Naive thymus-derived CD4-positive, alpha-beta T cell (primary cell): ENCODE measurements at regions of chr9 and their contacts with region 1.

Region 1: GRCh38 chr9:32550562-32551433 is 1.3 kb upstream of the SMIM27 start:
- DNase-seq: peak; percentile 89 to 99 (median 96)
- ATAC-seq: peak; percentile 90
- H3K4me3 ChIP-seq: peak overlapping the region; percentile 93
- H3K4me3 Mint-ChIP-seq: peak overlapping the region; percentile 92 to 100 (median 99)
- H3K27ac ChIP-seq: peak overlapping the region; percentile 97
- H3K27ac Mint-ChIP-seq: peak overlapping the region; percentile 96 to 100 (median 98)
- H3K4me1 ChIP-seq: peaks cover 13 to 20% of the 10 kb centered on the region in 2 donors
- H3K4me1 Mint-ChIP-seq: peaks cover 31 to 70% (median 56%) of the 10 kb centered on the region in 7 donors
- H3K27me3 ChIP-seq: no peaks in the 10 kb centered on the region
- H3K27me3 Mint-ChIP-seq: no peaks in the 10 kb centered on the region

Region 2: GRCh38 chr9:32334100-32334499 is 216.7 kb before region 1 on chr9:
- CTCF ChIA-PET with region 1: no interaction called
- POLR2A ChIA-PET with region 1: no interaction called
- intact Hi-C with region 1: no loop called
- DNase-seq: no peak
- ATAC-seq: no peak
- H3K4me3 ChIP-seq: no peak overlapping the region
- H3K4me3 Mint-ChIP-seq: no peak overlapping the region
- H3K27ac ChIP-seq: no peak overlapping the region
- H3K27ac Mint-ChIP-seq: no peak overlapping the region
- H3K4me1 ChIP-seq: no peaks in the 10 kb centered on the region
- H3K4me1 Mint-ChIP-seq: peaks cover 0 to 2% (median 0%) of the 10 kb centered on the region in 7 donors
- H3K27me3 ChIP-seq: no peaks in the 10 kb centered on the region
- H3K27me3 Mint-ChIP-seq: peaks cover 2 to 16% (median 5%) of the 10 kb centered on the region in 5 donors

Region 3: DNA sequence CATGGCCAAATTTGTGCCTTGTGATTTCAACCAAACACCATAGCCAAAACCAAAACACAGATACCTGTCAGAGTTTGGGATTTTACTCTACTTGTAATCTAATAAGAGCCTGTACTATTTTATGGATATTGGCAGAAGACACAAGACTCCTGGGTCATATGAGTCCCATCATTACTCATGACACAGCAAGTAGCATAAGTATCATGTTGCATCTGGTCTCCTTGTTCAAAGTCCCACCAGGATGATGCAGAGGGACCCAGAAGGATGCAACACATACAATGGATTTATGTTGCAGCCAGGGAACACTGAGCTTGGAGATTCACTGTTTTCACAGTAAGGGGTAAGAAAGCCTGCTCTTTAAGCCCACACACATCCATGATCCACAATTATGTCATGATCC is 179.5 kb before region 1 on chr9:
- CTCF ChIA-PET with region 1: no interaction called
- POLR2A ChIA-PET with region 1: no interaction called
- intact Hi-C with region 1: no loop called
- DNase-seq: no peak
- ATAC-seq: no peak
- H3K4me3 ChIP-seq: no peak overlapping the region
- H3K4me3 Mint-ChIP-seq: no peak overlapping the region
- H3K27ac ChIP-seq: no peak overlapping the region
- H3K27ac Mint-ChIP-seq: no peak overlapping the region
- H3K4me1 ChIP-seq: no peaks in the 10 kb centered on the region
- H3K4me1 Mint-ChIP-seq: no peaks in the 10 kb centered on the region
- H3K27me3 ChIP-seq: no peaks in the 10 kb centered on the region
- H3K27me3 Mint-ChIP-seq: peaks cover 0 to 12% (median 0%) of the 10 kb centered on the region in 5 donors

Region 4: GRCh38 chr9:32384364-32385151 is 166.2 kb before region 1 on chr9 and contains the start of gene ACO1:
- CTCF ChIA-PET with region 1: interaction called, 10 read pairs
- POLR2A ChIA-PET with region 1: interaction called, 16 read pairs
- intact Hi-C with region 1: loop called (anchors 1 kb)
- DNase-seq: peak; percentile 74 to 91 (median 83)
- ATAC-seq: peak; percentile 99
- H3K4me3 ChIP-seq: peak within 1 kb of the TSS; percentile 58
- H3K4me3 Mint-ChIP-seq: peak within 1 kb of the TSS; percentile 84 to 92 (median 88)
- H3K27ac ChIP-seq: peak within 1 kb of the TSS; percentile 70
- H3K27ac Mint-ChIP-seq: peak within 1 kb of the TSS in 8 of 9 donors; percentile 10 to 82 (median 58)
- H3K4me1 ChIP-seq: peaks cover 5 to 12% of the 10 kb centered on the region in 2 donors
- H3K4me1 Mint-ChIP-seq: peaks cover 13 to 29% (median 22%) of the 10 kb centered on the region in 7 donors
- H3K27me3 ChIP-seq: no peaks in the 10 kb centered on the region
- H3K27me3 Mint-ChIP-seq: peaks cover 0 to 31% (median 8%) of the 10 kb centered on the region in 5 donors
- total RNA-seq, gene ACO1: 4.7 to 10.5 (median 7.4) TPM

Region 5: GRCh38 chr9:32571969-32572899 is 21.4 kb after region 1 on chr9:
- CTCF ChIA-PET with region 1: interaction called, 48 read pairs
- POLR2A ChIA-PET with region 1: interaction called, 13 read pairs
- intact Hi-C with region 1: loop called (anchors 1 kb)
- DNase-seq: peak; percentile 33 to 85 (median 77)
- ATAC-seq: peak; percentile 92
- H3K4me3 ChIP-seq: peak overlapping the region; percentile 92
- H3K4me3 Mint-ChIP-seq: peak overlapping the region; percentile 98 to 100 (median 99)
- H3K27ac ChIP-seq: peak overlapping the region; percentile 86
- H3K27ac Mint-ChIP-seq: peak overlapping the region; percentile 93 to 99 (median 99)
- H3K4me1 ChIP-seq: peaks cover 14 to 22% of the 10 kb centered on the region in 2 donors
- H3K4me1 Mint-ChIP-seq: peaks cover 18 to 43% (median 30%) of the 10 kb centered on the region in 7 donors
- H3K27me3 ChIP-seq: no peaks in the 10 kb centered on the region
- H3K27me3 Mint-ChIP-seq: peaks cover 0 to 10% (median 0%) of the 10 kb centered on the region in 5 donors

Region 6: DNA sequence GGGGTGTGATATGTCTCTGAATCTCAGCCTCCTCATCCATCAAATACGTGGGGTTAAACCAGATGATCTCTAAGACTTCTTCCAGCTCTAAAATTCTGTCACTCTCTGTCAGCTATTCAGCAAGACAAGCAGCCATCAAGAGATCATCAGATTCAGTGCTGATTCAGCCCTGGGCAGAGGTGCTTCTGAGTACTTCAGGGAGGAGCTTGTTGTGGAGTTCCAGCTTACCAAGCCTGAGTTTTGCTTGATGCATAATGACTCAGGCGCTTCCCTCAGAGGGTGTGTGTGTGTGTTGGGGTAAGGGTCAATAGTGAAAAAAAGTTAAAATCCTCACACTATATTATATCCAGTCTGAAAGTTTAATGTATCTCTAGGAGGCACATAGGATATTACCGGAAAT is 114.3 kb after region 1 on chr9:
- CTCF ChIA-PET with region 1: no interaction called
- POLR2A ChIA-PET with region 1: no interaction called
- intact Hi-C with region 1: no loop called
- DNase-seq: no peak
- ATAC-seq: no peak
- H3K4me3 ChIP-seq: no peak overlapping the region
- H3K4me3 Mint-ChIP-seq: no peak overlapping the region
- H3K27ac ChIP-seq: no peak overlapping the region
- H3K27ac Mint-ChIP-seq: no peak overlapping the region
- H3K4me1 ChIP-seq: no peaks in the 10 kb centered on the region
- H3K4me1 Mint-ChIP-seq: no peaks in the 10 kb centered on the region
- H3K27me3 ChIP-seq: no peaks in the 10 kb centered on the region
- H3K27me3 Mint-ChIP-seq: peaks cover 0 to 44% (median 8%) of the 10 kb centered on the region in 5 donors

Region 7: DNA sequence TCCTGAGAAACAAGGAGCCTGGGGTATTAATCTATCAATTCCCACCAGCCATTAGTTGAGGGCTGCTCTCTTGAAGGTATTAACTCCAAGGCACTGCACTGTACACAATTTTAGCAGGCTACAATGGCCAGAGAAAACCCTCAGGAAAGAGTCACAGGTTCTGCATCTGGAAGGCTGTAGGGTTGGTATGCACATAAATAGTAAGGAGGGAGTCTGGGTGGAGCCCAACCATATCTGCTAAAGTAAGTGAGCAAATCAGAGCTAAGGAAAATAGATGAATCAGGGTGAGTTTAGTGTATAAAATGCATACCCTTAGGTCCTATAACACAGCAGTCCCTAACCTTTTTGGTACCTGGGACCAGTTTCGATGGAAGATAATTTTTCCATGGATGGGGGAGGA is 250.7 kb after region 1 on chr9:
- CTCF ChIA-PET with region 1: no interaction called
- POLR2A ChIA-PET with region 1: no interaction called
- intact Hi-C with region 1: no loop called
- DNase-seq: no peak
- ATAC-seq: no peak
- H3K4me3 ChIP-seq: no peak overlapping the region
- H3K4me3 Mint-ChIP-seq: no peak overlapping the region
- H3K27ac ChIP-seq: no peak overlapping the region
- H3K27ac Mint-ChIP-seq: no peak overlapping the region
- H3K4me1 ChIP-seq: no peaks in the 10 kb centered on the region
- H3K4me1 Mint-ChIP-seq: no peaks in the 10 kb centered on the region
- H3K27me3 ChIP-seq: no peaks in the 10 kb centered on the region
- H3K27me3 Mint-ChIP-seq: peaks cover 0 to 54% (median 28%) of the 10 kb centered on the region in 5 donors

Region 8: DNA sequence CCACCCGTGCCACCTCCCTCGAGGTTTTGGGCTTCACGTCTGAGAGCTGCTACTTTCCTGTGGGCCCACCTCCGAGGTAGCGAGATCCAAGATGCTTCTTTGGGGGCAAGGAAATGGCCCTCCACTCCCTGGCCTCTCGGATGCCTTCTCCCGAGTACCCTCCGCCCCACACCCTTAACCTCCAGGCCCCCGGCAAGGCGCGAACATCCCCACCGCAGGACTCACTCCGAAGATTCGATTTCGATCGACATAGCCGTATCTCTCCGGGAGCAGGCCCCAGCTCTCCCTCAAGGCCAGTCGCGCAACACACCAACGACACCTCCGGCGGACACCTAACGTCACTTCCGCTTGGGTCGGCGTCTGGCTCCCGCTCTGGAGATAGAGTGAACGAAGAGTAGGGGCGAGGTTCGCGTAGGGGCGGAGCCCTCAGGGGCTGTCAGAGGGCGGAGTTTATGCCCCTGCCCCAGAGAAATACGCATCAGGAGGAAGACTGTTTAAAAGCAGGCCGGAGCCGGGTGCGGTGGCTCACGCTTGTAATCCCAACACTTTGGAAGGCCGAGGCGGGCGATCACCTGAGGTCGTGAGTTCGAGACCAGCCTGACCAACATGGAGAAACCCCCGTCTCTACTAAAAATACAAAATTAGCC is 525.7 kb after region 1 on chr9 and contains the start of gene SMU1:
- CTCF ChIA-PET with region 1: no interaction called
- POLR2A ChIA-PET with region 1: no interaction called
- intact Hi-C with region 1: loop called (anchors 1 to 5 kb)
- DNase-seq: peak; percentile 82 to 97 (median 95)
- ATAC-seq: peak; percentile 97
- H3K4me3 ChIP-seq: peak within 1 kb of the TSS; percentile 82
- H3K4me3 Mint-ChIP-seq: peak within 1 kb of the TSS; percentile 95 to 100 (median 98)
- H3K27ac ChIP-seq: peak within 1 kb of the TSS; percentile 93
- H3K27ac Mint-ChIP-seq: peak within 1 kb of the TSS; percentile 97 to 100 (median 99)
- H3K4me1 ChIP-seq: peaks cover 16 to 21% of the 10 kb centered on the region in 2 donors
- H3K4me1 Mint-ChIP-seq: peaks cover 17 to 61% (median 48%) of the 10 kb centered on the region in 7 donors
- H3K27me3 ChIP-seq: no peaks in the 10 kb centered on the region
- H3K27me3 Mint-ChIP-seq: no peaks in the 10 kb centered on the region
- total RNA-seq, gene SMU1: 22.3 to 32.9 (median 25.6) TPM

Region 9: GRCh38 chr9:34048923-34049697 is 1498.3 kb after region 1 on chr9:
- CTCF ChIA-PET with region 1: no interaction called
- POLR2A ChIA-PET with region 1: no interaction called
- intact Hi-C with region 1: loop called (anchors 2 to 5 kb)
- DNase-seq: peak; percentile 96 to 99 (median 97)
- ATAC-seq: peak; percentile 93
- H3K4me3 ChIP-seq: peak overlapping the region; percentile 98
- H3K4me3 Mint-ChIP-seq: peak overlapping the region; percentile 96 to 100 (median 98)
- H3K27ac ChIP-seq: peak overlapping the region; percentile 86
- H3K27ac Mint-ChIP-seq: peak overlapping the region; percentile 98 to 100 (median 99)
- H3K4me1 ChIP-seq: peaks cover 11 to 22% of the 10 kb centered on the region in 2 donors
- H3K4me1 Mint-ChIP-seq: peaks cover 25 to 55% (median 31%) of the 10 kb centered on the region in 7 donors
- H3K27me3 ChIP-seq: no peaks in the 10 kb centered on the region
- H3K27me3 Mint-ChIP-seq: peaks cover 0 to 4% (median 0%) of the 10 kb centered on the region in 5 donors